Activated CD4-positive, alpha-beta T cell treated with anti-CD3 and anti-CD28 coated beads for 36 hours (primary cell): ENCODE measurements at regions of chr1 and their contacts with region 1.

Region 1: DNA sequence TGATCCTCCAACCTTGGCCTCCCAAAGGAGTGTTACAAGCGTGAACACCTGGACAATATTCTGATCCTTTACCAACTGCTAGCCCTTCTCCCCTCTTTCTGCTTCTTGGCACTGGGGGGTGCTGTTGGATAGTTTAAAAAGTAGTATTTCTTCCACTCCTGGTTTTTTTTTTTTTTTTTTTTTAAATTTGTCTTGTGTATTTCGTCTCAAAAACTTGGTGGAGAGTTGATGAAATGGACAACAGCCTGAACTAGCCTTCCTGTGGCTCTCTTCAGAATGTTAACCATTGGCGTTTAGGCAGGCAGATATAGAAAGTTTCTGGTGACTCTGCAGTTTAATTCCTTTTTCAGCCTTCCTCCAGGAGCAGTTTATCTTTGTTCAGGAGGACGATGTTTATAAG is 69.7 kb upstream of the USP24 start:
- DNase-seq: peak; percentile 43
- ATAC-seq: no peak
- H3K4me3 Mint-ChIP-seq: no peak overlapping the region
- H3K27ac Mint-ChIP-seq: no peak overlapping the region
- H3K4me1 Mint-ChIP-seq: peaks cover 16% of the 10 kb centered on the region
- H3K27me3 Mint-ChIP-seq: peaks cover 4% of the 10 kb centered on the region

Region 2: GRCh38 chr1:55337801-55338447 is 53.1 kb after region 1 on chr1:
- CTCF ChIA-PET with region 1: interaction called, 4 read pairs
- POLR2A ChIA-PET with region 1: no interaction called
- intact Hi-C with region 1: loop called (anchors 1 to 2 kb)
- DNase-seq: peak; percentile 31
- ATAC-seq: peak; percentile 75
- H3K4me3 Mint-ChIP-seq: no peak overlapping the region
- H3K27ac Mint-ChIP-seq: no peak overlapping the region
- H3K4me1 Mint-ChIP-seq: no peaks in the 10 kb centered on the region
- H3K27me3 Mint-ChIP-seq: no peaks in the 10 kb centered on the region

Region 3: DNA sequence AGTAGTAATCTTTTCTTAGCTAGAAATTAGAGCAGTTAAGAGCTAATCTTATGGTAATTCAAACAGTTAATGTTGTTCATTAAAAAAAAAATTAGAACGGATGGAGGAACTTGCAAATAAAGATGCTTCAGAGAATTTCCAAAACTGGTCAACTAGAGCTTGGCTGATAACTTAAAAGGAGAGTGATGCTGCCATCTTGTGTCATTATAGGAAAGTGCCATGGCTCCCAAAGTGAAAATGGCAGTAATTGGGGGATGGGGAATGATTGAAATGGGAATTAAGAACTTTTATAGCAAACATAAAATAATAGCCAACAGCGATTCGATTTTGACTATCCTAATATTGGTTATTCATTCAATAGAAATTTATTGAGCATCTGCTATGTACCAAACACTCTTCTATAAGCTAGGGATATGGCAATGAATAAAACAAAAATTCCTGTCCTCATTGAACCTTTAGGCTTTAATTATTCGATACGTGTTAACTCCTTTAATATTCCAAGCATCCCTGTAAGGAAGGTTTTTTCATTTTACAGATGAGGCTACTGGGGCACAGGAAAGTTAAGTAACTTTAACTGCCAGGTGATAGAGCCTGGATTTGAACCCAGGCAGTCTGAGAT is 1300.2 kb after region 1 on chr1:
- CTCF ChIA-PET with region 1: interaction called, 3 read pairs
- POLR2A ChIA-PET with region 1: no interaction called
- intact Hi-C with region 1: loop called (anchors 5 to 10 kb)
- DNase-seq: no peak
- ATAC-seq: no peak
- H3K4me3 Mint-ChIP-seq: no peak overlapping the region
- H3K27ac Mint-ChIP-seq: no peak overlapping the region
- H3K4me1 Mint-ChIP-seq: peaks cover under 1% of the 10 kb centered on the region
- H3K27me3 Mint-ChIP-seq: peaks cover 10% of the 10 kb centered on the region

Region 4: DNA sequence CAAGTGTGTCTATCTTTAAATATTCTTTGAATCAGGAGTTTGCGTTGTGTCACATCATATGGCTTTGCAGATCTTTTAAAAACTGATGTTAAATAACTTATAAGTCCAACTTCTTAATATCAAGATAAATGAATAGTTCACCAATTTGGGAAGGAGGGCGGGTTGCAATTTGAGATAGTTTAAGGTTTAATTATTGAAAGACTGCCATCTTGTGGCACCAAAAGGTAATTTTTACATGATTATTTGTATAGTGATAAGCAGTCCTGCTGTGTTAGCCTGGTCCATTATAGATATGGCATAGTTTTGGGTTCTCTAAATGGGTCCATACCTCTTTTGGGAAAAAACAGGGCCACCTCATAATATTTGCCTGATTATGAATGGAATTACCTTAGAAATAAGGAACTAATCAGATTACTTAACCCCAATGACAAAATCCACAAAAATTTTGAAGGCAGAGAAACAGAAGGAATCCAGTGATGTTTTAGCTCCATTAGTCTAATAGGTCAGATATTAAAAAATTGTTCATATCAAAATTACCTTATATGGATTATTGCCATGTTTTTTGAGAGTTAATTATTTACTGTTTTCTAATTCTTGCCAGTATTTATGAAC is 1424.5 kb after region 1 on chr1:
- CTCF ChIA-PET with region 1: interaction called, 3 read pairs
- POLR2A ChIA-PET with region 1: no interaction called
- intact Hi-C with region 1: loop called (anchors 2 to 5 kb)
- DNase-seq: no peak
- ATAC-seq: peak; percentile 44
- H3K4me3 Mint-ChIP-seq: no peak overlapping the region
- H3K27ac Mint-ChIP-seq: no peak overlapping the region
- H3K4me1 Mint-ChIP-seq: no peaks in the 10 kb centered on the region
- H3K27me3 Mint-ChIP-seq: peaks cover 18% of the 10 kb centered on the region

Region 5: GRCh38 chr1:56821140-56821797 is 1536.4 kb after region 1 on chr1:
- CTCF ChIA-PET with region 1: no interaction called
- POLR2A ChIA-PET with region 1: no interaction called
- intact Hi-C with region 1: loop called in 1 of 2 experiments (anchors 2 kb)
- DNase-seq: peak; percentile 87
- ATAC-seq: peak; percentile 71
- H3K4me3 Mint-ChIP-seq: no peak overlapping the region
- H3K27ac Mint-ChIP-seq: no peak overlapping the region
- H3K4me1 Mint-ChIP-seq: no peaks in the 10 kb centered on the region
- H3K27me3 Mint-ChIP-seq: peaks cover 6% of the 10 kb centered on the region